ENCODE measurements at regions of chr20 and their contacts with region 1.

Region 1: DNA sequence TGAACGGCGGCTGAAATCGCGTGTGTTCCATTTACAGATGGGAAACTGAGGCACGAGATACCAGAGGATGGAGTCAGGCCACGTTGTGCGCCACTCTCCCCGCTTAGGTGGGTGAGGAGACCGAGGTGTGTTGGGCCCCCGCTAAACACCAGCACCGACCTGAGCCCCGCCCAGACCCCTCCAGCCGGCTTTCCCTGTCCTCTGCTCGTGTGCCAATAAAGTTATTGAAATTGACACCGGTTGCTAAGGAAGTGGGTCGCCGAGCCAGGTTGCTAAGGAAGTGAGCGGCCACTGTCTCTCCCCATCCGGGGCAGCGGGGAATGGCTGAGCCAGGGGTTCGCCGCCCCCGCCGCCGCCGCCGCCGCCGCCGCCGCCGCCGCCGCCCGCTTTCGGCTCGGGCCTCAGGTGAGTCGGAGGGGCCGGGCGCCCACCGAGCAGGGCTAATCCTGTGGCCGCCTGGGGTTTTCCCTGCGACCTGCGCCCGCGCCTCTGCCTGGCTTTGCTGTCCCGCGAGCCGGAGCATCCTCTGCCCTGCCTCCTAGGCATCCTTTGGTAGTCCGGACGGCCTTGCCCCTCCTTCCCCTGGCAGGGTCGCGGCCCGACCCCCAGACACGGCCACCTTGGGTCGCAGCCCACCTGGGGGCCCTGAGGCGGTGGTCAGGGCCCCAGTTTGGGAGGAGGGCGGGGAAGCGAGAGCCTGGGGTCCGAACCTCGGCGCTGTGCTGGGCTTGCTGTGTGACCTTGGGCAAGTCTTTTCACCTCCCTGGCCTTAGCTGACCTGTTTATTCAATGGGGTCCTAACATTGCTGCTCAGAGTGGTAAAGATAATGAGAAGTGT is at the start of gene KIF3B:
- DNase-seq: peak; percentile 85 to 98 (median 90)

Region 2: GRCh38 chr20:32465092-32465900 is 187.7 kb after region 1 on chr20:
- intact Hi-C with region 1: loop called (anchors 10 kb)
- DNase-seq: peak in 5 of 10 donors; percentile 13 to 83 (median 59)

Measured in posterior cingulate gyrus (tissue), 11 donors.